GM12878 (cell line): ENCODE measurements at regions of chr16 and their contacts with region 1.

Region 1: DNA sequence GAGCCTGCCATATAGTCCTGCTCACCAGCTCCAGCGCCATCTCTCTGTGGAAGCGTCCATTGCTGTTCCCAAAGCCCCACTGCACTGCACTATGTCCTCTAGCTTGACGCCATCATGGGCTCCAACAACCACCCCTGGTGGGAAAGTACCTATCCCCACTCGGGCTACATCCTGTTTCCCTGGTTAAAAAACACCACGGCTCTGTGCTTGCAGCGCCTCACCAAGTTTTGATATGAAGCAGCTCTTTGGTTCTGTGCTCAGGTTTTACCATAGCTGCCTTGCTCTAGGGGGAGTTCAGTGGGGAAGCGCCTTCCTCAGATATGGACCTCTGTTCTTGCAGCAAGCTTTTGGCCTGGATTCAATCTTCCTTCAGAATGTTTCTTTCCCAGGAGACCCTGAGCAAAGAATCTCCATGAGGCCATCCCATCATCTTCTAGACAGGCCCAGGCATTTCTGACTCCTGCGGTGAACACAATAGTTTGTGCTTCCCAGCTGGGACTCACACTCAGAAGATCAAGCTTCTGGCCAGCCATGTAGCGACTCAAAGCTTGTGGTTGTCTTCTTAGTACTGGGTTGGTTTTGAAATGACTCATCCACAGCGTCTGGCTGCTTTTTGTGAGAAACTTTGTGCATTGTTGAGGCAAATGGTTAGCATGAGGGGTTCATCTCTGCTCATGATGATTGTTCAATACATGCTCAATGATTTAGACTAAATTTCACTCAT is 39.5 kb downstream of the DYNLRB2 start:
- DNase-seq: peak; percentile 89
- ATAC-seq: peak; percentile 92
- H3K4me3 ChIP-seq: no peak overlapping the region
- H3K27ac ChIP-seq: peak overlapping the region; percentile 92
- H3K4me1 ChIP-seq: peaks cover 30% of the 10 kb centered on the region
- H3K27me3 ChIP-seq: no peaks in the 10 kb centered on the region
- CTCF ChIP-seq: peak in 1 of 3 experiments; percentile 44; a peak in 2 of 6 replicates
- EP300 ChIP-seq: peak; percentile 51 to 63; a peak in 2 of 4 replicates
- POLR2A ChIP-seq: peak; percentile 35; the same call in 1 of the 2 replicates
- RAD21 ChIP-seq: peak; percentile 27

Region 2: GRCh38 chr16:80639641-80640040 is 59.4 kb after region 1 on chr16:
- CTCF ChIA-PET with region 1: no interaction called
- POLR2A ChIA-PET with region 1: no interaction called
- RAD21 ChIA-PET with region 1: no interaction called
- SMC1A ChIA-PET with region 1: no interaction called
- in situ Hi-C with region 1: no loop called
- intact Hi-C with region 1: no loop called
- DNase-seq: no peak
- ATAC-seq: no peak
- H3K4me3 ChIP-seq: no peak overlapping the region
- H3K27ac ChIP-seq: no peak overlapping the region
- H3K4me1 ChIP-seq: no peaks in the 10 kb centered on the region
- H3K27me3 ChIP-seq: no peaks in the 10 kb centered on the region
- CTCF ChIP-seq: no peak
- EP300 ChIP-seq: no peak
- POLR2A ChIP-seq: no peak
- RAD21 ChIP-seq: no peak

Region 3: GRCh38 chr16:80674884-80675283 is 94.6 kb after region 1 on chr16:
- CTCF ChIA-PET with region 1: no interaction called
- POLR2A ChIA-PET with region 1: no interaction called
- RAD21 ChIA-PET with region 1: interaction called, 3 read pairs
- SMC1A ChIA-PET with region 1: no interaction called
- in situ Hi-C with region 1: no loop called
- intact Hi-C with region 1: loop called (anchors 5 kb)
- DNase-seq: no peak
- ATAC-seq: no peak
- H3K4me3 ChIP-seq: no peak overlapping the region
- H3K27ac ChIP-seq: no peak overlapping the region
- H3K4me1 ChIP-seq: peaks cover 27% of the 10 kb centered on the region
- H3K27me3 ChIP-seq: no peaks in the 10 kb centered on the region
- CTCF ChIP-seq: no peak
- EP300 ChIP-seq: no peak
- POLR2A ChIP-seq: no peak
- RAD21 ChIP-seq: no peak